Activated CD4-positive, alpha-beta memory T cell treated with anti-CD3 and anti-CD28 coated beads for 36 hours (primary cell): ENCODE measurements at regions of chr1 and their contacts with region 1.

Region 1: DNA sequence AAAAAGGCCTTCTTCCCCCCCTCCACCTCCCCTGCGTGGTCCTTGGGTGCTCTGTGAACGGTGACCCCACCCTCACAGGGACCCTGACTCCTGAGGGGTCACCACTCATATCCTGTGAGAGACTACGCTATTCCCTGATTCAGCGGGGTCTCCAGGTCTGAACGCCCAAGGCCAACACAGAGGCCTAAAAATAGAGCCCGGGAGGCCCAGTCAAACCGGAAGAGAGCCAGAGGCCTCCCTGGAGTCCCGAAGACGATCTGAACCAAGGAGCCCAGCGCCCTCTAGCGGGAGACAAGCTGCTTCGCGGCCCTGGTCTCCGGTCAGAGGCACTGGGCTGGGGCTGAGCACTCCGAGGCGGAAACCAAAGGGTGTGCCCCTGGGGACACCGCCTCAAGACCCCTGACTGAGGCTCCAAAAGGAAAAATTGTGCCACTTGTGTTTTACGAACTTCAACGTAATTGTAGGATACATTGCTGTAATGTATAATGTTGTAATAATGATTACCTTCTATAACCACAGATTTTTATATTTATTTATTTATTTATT is 42.4 kb upstream of the PSEN2 start:
- DNase-seq: peak; percentile 98
- H3K4me3 Mint-ChIP-seq: peak overlapping the region; percentile 52
- H3K27ac Mint-ChIP-seq: peak overlapping the region; percentile 88
- H3K4me1 Mint-ChIP-seq: peaks cover 28% of the 10 kb centered on the region
- H3K27me3 Mint-ChIP-seq: no peaks in the 10 kb centered on the region

Region 2: GRCh38 chr1:226634166-226634588 is 193.9 kb before region 1 on chr1:
- CTCF ChIA-PET with region 1: interaction called, 73 read pairs
- POLR2A ChIA-PET with region 1: interaction called, 3 read pairs
- intact Hi-C with region 1: loop called (anchors 1 kb)
- DNase-seq: peak; percentile 86
- H3K4me3 Mint-ChIP-seq: no peak overlapping the region
- H3K27ac Mint-ChIP-seq: peak overlapping the region; percentile 11
- H3K4me1 Mint-ChIP-seq: peaks cover 57% of the 10 kb centered on the region
- H3K27me3 Mint-ChIP-seq: no peaks in the 10 kb centered on the region

Region 3: DNA sequence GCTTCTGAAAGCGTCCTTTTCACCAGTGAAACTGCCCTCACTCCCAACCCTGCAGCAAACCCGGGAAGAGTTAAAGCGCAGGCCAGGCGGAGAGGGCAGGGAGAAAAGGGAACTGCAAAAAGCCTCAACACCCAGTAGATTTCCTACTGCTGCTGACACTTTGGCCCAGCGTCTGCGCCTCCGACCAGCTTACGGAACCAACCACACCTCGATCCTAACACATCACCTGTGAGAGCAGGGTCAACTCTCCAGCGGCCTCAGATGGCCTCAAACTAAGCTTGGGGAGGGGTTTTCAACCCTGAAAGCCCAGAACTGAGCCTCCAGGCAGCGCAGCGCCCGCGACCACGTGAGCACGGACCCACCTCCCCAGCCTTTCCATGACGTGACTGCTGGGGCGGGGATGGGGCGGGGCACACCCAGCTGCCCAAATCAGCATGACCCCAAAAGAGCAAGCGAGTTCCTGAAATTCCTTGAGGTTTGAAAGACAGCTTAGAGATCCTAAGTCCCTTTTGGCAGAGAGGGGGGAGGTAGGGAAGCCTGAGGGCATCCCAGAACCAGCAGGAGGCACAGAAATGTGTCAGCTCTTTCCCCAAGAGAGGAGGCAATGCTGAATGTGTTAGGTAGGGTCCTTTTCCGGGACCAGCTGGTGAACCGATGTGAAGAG is 148.1 kb before region 1 on chr1:
- CTCF ChIA-PET with region 1: no interaction called
- POLR2A ChIA-PET with region 1: no interaction called
- intact Hi-C with region 1: loop called (anchors 5 kb)
- DNase-seq: peak; percentile 89
- H3K4me3 Mint-ChIP-seq: peak overlapping the region; percentile 71
- H3K27ac Mint-ChIP-seq: peak overlapping the region; percentile 93
- H3K4me1 Mint-ChIP-seq: peaks cover 98% of the 10 kb centered on the region
- H3K27me3 Mint-ChIP-seq: no peaks in the 10 kb centered on the region

Region 4: GRCh38 chr1:226711976-226712741 is 115.9 kb before region 1 on chr1:
- CTCF ChIA-PET with region 1: interaction called, 15 read pairs
- POLR2A ChIA-PET with region 1: no interaction called
- intact Hi-C with region 1: loop called (anchors 2 kb)
- DNase-seq: peak; percentile 81
- H3K4me3 Mint-ChIP-seq: peak overlapping the region; percentile 57
- H3K27ac Mint-ChIP-seq: peak overlapping the region; percentile 85
- H3K4me1 Mint-ChIP-seq: peaks cover 94% of the 10 kb centered on the region
- H3K27me3 Mint-ChIP-seq: no peaks in the 10 kb centered on the region

Region 5: DNA sequence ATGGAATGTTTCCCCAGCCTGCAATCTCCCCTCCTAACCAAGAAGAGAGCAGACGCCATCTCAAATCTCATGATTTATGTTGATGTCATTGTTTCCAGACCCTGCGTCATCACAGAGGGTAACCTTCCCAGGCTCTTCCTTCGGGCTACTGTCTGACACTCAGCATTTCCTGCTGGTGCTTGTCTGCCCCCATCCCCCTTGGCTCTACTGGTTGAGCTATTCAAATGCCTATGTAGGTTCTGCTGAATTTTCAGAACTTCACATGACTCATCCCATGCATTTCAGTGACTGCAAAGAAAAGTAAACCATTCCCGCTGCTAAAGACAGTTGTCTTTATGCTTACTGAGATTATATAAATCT is 64.2 kb before region 1 on chr1:
- CTCF ChIA-PET with region 1: no interaction called
- POLR2A ChIA-PET with region 1: no interaction called
- intact Hi-C with region 1: no loop called
- DNase-seq: peak; percentile 60
- H3K4me3 Mint-ChIP-seq: no peak overlapping the region
- H3K27ac Mint-ChIP-seq: peak overlapping the region; percentile 33
- H3K4me1 Mint-ChIP-seq: peaks cover 32% of the 10 kb centered on the region
- H3K27me3 Mint-ChIP-seq: no peaks in the 10 kb centered on the region

Region 6: DNA sequence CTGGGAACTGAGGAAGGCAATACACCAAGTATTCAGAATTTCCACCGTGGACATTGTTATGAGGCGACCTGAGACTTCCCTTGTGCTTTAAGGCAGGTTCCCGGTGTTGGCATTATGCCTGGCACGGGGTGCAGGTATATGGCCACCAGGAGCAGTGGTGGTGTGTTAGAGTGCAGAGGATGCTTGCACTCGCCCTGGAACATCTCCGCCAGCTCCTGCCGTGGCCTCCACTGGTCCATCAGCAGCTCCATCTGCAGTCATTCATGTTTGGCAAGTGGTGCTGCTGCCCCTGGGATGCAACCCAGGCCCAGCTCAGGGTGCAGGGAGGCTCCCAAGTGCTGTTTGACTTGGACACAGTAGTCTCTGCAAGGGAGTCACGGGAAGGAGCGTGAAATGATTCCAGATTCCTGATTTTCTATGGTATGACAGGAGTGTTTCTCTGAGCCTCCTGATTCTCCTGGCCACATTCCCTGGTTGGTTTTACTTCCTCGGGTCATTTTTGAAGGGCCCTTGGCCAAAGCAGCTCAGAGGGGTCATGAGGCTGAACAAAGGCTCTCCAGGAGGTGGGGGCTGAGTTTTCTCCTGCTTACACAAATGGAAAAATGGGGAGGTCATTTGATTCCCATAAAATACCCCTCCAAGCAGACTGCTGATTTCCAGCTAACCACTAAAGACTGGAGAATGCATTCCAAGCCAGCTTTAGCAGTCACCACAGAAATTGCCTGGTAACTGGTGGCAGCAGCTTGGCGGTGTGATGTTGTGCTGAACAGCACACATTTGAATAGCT is 18.1 kb before region 1 on chr1:
- CTCF ChIA-PET with region 1: no interaction called
- POLR2A ChIA-PET with region 1: no interaction called
- intact Hi-C with region 1: no loop called
- DNase-seq: no peak
- H3K4me3 Mint-ChIP-seq: no peak overlapping the region
- H3K27ac Mint-ChIP-seq: no peak overlapping the region
- H3K4me1 Mint-ChIP-seq: peaks cover 6% of the 10 kb centered on the region
- H3K27me3 Mint-ChIP-seq: no peaks in the 10 kb centered on the region

Region 7: GRCh38 chr1:227152525-227152924 is 324.5 kb after region 1 on chr1:
- CTCF ChIA-PET with region 1: no interaction called
- POLR2A ChIA-PET with region 1: no interaction called
- intact Hi-C with region 1: no loop called
- DNase-seq: no peak
- H3K4me3 Mint-ChIP-seq: no peak overlapping the region
- H3K27ac Mint-ChIP-seq: no peak overlapping the region
- H3K4me1 Mint-ChIP-seq: no peaks in the 10 kb centered on the region
- H3K27me3 Mint-ChIP-seq: no peaks in the 10 kb centered on the region